ENCODE measurements at regions of chr11 and their contacts with region 1.

Region 1: DNA sequence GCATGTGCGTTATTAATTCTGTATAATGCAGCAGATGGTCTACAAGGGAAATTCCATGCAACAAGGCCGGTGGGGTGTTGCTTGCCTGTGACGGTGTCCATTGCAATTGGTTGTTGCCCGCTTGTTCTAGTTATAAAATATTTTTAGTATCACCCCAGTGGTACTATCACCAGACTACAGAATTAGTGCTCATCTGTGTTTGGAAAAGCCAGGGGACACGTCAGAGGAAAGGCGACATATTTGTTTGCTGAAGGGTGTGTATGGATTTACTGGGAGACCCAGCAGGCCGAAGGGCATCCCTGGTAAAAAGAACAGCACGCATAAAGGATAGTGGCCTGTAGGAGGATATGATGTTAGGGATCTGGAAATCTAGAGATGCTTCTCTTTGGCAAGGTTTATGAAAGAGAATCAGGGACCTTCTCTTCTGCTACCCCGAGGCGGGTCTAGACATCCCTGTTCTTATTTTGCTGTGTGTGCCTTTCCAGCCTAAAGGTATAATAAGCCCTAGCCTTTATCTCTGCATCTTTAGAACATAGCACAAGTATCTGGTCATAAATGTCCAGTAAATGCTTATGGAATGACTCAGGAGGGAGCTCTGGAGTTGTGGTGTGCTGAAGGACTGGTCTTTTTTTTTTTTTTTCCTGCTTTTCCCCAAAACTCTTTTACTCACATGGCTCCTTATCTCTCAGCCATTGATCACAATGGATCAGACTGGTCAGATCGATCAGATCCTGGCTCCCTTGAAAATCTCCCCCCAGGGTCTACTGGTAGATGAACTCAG is 90.9 kb downstream of the LDLRAD3 start:
- DNase-seq: no peak
- ATAC-seq: no peak
- H3K4me3 ChIP-seq: no peak overlapping the region
- H3K4me1 ChIP-seq: no peaks in the 10 kb centered on the region
- CTCF ChIP-seq: no peak

Region 2: GRCh38 chr11:36088266-36088972 is 53.7 kb after region 1 on chr11:
- intact Hi-C with region 1: loop called in 1 of 2 experiments (anchors 5 kb)
- DNase-seq: no peak
- ATAC-seq: no peak
- H3K4me3 ChIP-seq: no peak overlapping the region
- H3K4me1 ChIP-seq: no peaks in the 10 kb centered on the region
- CTCF ChIP-seq: no peak

Region 3: GRCh38 chr11:36162883-36163434 is 128.2 kb after region 1 on chr11:
- intact Hi-C with region 1: no loop called
- DNase-seq: no peak
- ATAC-seq: no peak
- H3K4me3 ChIP-seq: no peak overlapping the region
- H3K4me1 ChIP-seq: no peaks in the 10 kb centered on the region
- CTCF ChIP-seq: no peak

Measured in mucosa of descending colon (tissue), 3 donors.